ENCODE measurements at regions of chr14 and their contacts with region 1.

Region 1: GRCh38 chr14:75267141-75267721 is 11.4 kb upstream of the FOS start:
- DNase-seq: peak; percentile 29
- H3K4me3 ChIP-seq: no peak overlapping the region
- H3K27ac ChIP-seq: peak overlapping the region; percentile 35
- H3K4me1 ChIP-seq: peaks cover 3% of the 10 kb centered on the region
- H3K27me3 ChIP-seq: no peaks in the 10 kb centered on the region
- CTCF ChIP-seq: no peak

Region 2: DNA sequence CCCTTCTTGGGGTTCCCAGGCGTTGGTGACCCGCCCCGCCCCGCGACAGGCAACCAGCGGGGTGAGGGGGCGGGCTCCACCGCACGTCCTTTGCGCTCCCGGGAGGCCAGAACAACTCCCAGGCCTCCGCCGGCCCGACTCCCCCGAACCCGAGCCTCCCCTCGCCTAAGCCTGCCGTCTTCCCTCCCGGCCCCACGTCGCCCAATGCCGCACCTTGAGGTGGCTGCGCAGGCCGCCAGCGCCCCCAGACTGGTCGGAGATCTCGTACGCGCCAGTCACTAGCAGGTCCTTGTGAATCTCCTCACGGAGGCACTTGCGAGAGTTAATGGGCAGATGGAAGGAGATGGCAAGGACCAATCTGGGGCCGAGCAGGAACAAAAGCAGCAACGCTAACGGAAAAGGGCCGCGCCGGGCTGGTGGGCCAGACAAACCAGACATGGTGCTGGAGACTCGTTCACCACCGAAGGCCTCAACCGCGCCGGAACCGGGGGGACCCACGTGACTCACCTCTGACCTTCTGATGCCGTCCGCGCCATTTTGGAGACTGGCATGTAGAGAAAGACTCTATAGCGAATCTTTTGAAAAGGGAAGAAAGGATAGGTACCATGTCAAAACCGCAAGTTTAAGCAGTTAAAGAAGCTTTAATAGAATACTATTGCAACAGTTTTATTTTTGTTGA is 91.0 kb before region 1 on chr14 and contains the start of gene TMED10:
- CTCF ChIA-PET with region 1: no interaction called
- POLR2A ChIA-PET with region 1: interaction called, 13 read pairs
- intact Hi-C with region 1: no loop called
- DNase-seq: peak; percentile 94
- H3K4me3 ChIP-seq: peak within 1 kb of the TSS; percentile 72
- H3K27ac ChIP-seq: peak within 1 kb of the TSS; percentile 97
- H3K4me1 ChIP-seq: peaks cover 9% of the 10 kb centered on the region
- H3K27me3 ChIP-seq: no peaks in the 10 kb centered on the region
- CTCF ChIP-seq: no peak
- total RNA-seq, gene TMED10: 275 and 278 TPM in 2 replicates

Region 3: DNA sequence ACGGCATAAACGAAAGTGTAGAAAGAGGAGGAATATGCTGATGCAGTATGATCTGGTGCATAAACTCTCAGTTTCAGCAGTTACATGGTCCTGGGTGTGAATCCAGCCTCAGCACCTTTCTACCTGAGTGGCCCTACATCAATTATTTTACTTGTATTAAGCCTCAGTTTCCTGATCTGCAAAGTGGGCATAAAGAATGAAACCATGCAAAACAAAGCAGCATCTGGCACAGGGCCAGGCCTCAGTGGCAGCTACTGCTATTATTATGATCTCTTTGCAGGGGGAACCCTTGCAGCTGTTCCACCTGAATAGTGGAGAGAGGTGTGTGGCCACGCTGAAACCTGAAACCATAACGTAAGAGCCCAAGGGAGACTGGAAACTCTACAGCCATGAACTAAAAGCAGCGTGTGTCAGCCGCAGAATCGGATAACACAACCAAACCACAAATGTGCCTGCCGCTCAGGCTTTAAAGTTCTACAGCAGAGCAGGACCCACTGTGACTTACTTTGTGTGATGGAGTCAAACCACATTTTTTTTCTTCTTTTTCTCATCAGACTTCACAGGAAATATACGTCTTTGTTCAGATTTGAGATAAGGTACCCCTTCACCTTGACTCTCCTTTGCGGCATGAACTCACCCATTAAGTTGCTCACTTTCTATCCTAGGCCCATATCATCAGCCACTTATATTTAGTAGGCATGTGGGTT is 17.8 kb before region 1 on chr14:
- CTCF ChIA-PET with region 1: no interaction called
- POLR2A ChIA-PET with region 1: no interaction called
- intact Hi-C with region 1: no loop called
- DNase-seq: no peak
- H3K4me3 ChIP-seq: no peak overlapping the region
- H3K27ac ChIP-seq: no peak overlapping the region
- H3K4me1 ChIP-seq: peaks cover 16% of the 10 kb centered on the region
- H3K27me3 ChIP-seq: no peaks in the 10 kb centered on the region
- CTCF ChIP-seq: no peak